Mammary epithelial cell (primary cell): ENCODE measurements at regions of chr12 and their contacts with region 1.

Region 1: DNA sequence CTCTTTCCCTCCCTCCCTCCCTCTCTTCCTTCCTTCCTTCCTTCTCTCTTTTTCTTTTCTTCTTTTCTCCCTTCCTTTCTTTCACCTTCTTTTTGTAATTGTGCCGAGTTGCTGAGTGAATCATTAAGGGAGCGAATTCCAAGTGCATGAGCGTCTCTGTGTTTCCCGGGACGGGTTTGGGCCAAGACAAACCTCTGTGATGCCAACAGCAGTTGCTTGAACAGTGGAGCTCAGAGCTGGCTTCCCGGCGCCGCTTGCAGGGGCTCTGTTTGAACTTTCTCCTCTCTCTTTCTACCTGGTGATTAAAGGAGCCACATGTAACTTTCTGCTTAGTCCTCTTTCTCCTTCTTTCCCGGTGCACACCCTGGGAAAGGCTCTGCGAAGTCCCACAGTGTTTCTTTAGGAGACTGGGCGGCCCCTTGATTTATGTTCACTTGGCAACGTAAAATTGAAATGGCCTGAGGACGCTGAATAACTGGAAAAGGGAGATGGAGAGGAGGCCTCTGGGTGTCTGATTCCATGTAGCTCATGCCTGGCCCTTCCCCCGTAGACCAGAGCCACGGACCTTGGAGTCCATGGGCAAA is 33.7 kb upstream of the MAP1LC3B2 start:
- DNase-seq: peak; percentile 89
- H3K4me3 ChIP-seq: peak overlapping the region in 2 of 3 experiments; percentile 12 to 13
- H3K27ac ChIP-seq: peak overlapping the region; percentile 93
- H3K4me1 ChIP-seq: peaks cover 54% of the 10 kb centered on the region
- H3K27me3 ChIP-seq: no peaks in the 10 kb centered on the region
- CTCF ChIP-seq: no peak

Region 2: GRCh38 chr12:115998119-115998633 is 527.3 kb before region 1 on chr12:
- CTCF ChIA-PET with region 1: no interaction called
- dilution Hi-C with region 1: no loop called
- in situ Hi-C with region 1: no loop called
- intact Hi-C with region 1: loop called (anchors 5 kb)
- DNase-seq: peak; percentile 12
- H3K4me3 ChIP-seq: no peak overlapping the region
- H3K27ac ChIP-seq: no peak overlapping the region
- H3K4me1 ChIP-seq: no peaks in the 10 kb centered on the region
- H3K27me3 ChIP-seq: no peaks in the 10 kb centered on the region
- CTCF ChIP-seq: peak; percentile 60 to 70

Region 3: GRCh38 chr12:116559162-116559935 is 33.8 kb after region 1 on chr12 and contains the start of gene MAP1LC3B2:
- CTCF ChIA-PET with region 1: interaction called, 4 read pairs
- dilution Hi-C with region 1: no loop called
- in situ Hi-C with region 1: no loop called
- intact Hi-C with region 1: loop called (anchors 1 kb)
- DNase-seq: peak; percentile 99
- H3K4me3 ChIP-seq: peak within 1 kb of the TSS in 1 of 3 experiments; percentile 21
- H3K27ac ChIP-seq: peak within 1 kb of the TSS; percentile 90
- H3K4me1 ChIP-seq: peaks cover 27% of the 10 kb centered on the region
- H3K27me3 ChIP-seq: no peaks in the 10 kb centered on the region
- CTCF ChIP-seq: no peak
- total RNA-seq, gene MAP1LC3B2: 1.5 to 2.9 TPM

Region 4: GRCh38 chr12:117105902-117106301 is 580.4 kb after region 1 on chr12:
- CTCF ChIA-PET with region 1: no interaction called
- dilution Hi-C with region 1: no loop called
- in situ Hi-C with region 1: no loop called
- intact Hi-C with region 1: no loop called
- DNase-seq: peak; percentile 94
- H3K4me3 ChIP-seq: no peak overlapping the region
- H3K27ac ChIP-seq: no peak overlapping the region
- H3K4me1 ChIP-seq: no peaks in the 10 kb centered on the region
- H3K27me3 ChIP-seq: peaks cover 15% of the 10 kb centered on the region
- CTCF ChIP-seq: no peak